Lower leg skin (tissue), 4 donors: ENCODE measurements at regions of chr15 and their contacts with region 1.

Region 1: GRCh38 chr15:63466378-63467192 is 37.8 kb upstream of the USP3 start:
- DNase-seq: no peak
- H3K4me3 ChIP-seq: no peak overlapping the region
- CTCF ChIP-seq: no peak
- POLR2A ChIP-seq: no peak

Region 2: DNA sequence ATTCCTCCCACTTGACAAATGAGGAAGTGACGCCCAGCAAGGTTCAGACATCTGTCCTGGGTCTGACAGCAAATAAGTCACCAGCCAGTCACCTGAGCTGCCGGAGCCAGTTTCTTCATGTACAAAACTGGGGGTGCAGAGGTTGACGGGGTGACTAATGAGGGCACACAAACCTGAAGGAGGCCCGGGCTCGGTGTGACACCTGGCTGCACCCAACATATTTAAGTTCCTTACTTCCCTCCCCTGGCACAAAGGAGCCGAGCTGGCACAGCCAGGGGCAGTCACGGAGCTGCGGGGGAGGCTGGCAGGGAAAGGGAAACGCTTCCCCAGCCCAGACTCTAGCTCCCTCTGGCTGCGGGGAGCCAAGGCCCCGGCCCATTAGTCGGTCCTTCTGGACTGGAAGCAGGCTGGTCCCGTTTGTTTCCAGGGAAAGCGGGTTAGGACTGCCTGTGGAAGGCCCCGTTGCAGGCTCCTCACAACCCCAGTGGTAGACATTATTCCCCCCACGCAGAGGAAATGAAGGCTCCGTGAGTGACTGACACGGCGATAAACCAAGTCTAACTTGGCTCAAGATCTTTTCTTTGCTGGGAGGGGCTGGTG is 132.9 kb after region 1 on chr15:
- intact Hi-C with region 1: loop called (anchors 5 kb)
- DNase-seq: peak; percentile 60 to 91
- H3K4me3 ChIP-seq: no peak overlapping the region
- CTCF ChIP-seq: peak in 1 of 3 donors; percentile 29
- POLR2A ChIP-seq: no peak

Region 3: GRCh38 chr15:64344651-64345294 is 878.2 kb after region 1 on chr15:
- intact Hi-C with region 1: loop called (anchors 5 kb)
- DNase-seq: no peak
- H3K4me3 ChIP-seq: no peak overlapping the region
- CTCF ChIP-seq: no peak
- POLR2A ChIP-seq: no peak